HCT116 (cell line): ENCODE measurements at regions of chr11 and their contacts with region 1.

Region 1: GRCh38 chr11:73177778-73178577 is 35.9 kb upstream of the FCHSD2 start:
- DNase-seq: peak; percentile 42
- ATAC-seq: peak; percentile 99
- H3K4me3 ChIP-seq: no peak overlapping the region
- H3K27ac ChIP-seq: no peak overlapping the region
- H3K4me1 ChIP-seq: peaks cover 0 to 11% of the 10 kb centered on the region in 2 experiments; a peak in 1 of 4 replicates
- H3K27me3 ChIP-seq: no peaks in the 10 kb centered on the region
- CTCF ChIP-seq: peak; percentile 75 to 91 (median 86)
- POLR2A ChIP-seq: no peak
- RAD21 ChIP-seq: peak; percentile 99

Region 2: DNA sequence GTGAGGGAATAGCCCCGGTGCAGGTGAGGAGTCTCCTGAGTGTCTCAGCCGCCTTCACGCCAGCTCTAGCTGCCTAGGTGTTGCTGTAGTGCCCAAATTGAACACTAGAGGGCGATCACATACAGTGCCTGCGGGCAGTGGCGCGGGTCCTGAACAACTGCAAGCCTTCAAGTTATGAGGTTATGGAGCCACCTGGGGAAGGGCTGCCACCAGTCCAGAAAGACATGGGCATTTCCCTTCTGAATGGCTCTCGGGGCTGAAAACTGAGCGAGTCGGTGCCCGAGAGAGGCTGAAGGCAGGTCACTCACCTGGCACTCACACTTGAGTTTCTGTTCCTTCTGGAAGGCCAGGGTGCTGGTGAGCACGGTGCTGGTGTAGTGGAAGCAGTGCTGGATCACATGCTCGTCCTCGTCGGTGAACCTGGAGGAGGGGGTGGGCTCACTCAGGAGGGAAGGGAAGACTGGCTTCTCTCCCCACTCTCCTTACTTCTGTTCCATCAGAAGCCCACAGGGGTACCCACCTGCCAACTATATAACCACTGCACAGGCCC is 592.1 kb before region 1 on chr11:
- CTCF ChIA-PET with region 1: interaction called, 3 read pairs
- POLR2A ChIA-PET with region 1: no interaction called
- RAD21 ChIA-PET with region 1: no interaction called
- intact Hi-C with region 1: loop called (anchors 5 kb)
- DNase-seq: peak; percentile 38
- ATAC-seq: peak; percentile 94
- H3K4me3 ChIP-seq: no peak overlapping the region
- H3K27ac ChIP-seq: no peak overlapping the region
- H3K4me1 ChIP-seq: peaks cover 0 to 6% of the 10 kb centered on the region in 2 experiments; a peak in 1 of 4 replicates
- H3K27me3 ChIP-seq: no peaks in the 10 kb centered on the region
- CTCF ChIP-seq: peak; percentile 82 to 88 (median 85)
- POLR2A ChIP-seq: no peak
- RAD21 ChIP-seq: peak; percentile 86

Region 3: GRCh38 chr11:72683782-72684200 is 494.2 kb before region 1 on chr11:
- CTCF ChIA-PET with region 1: interaction called, 11 read pairs
- POLR2A ChIA-PET with region 1: no interaction called
- RAD21 ChIA-PET with region 1: interaction called in 1 of 2 experiments, 4 read pairs
- intact Hi-C with region 1: no loop called
- DNase-seq: no peak
- ATAC-seq: peak; percentile 74
- H3K4me3 ChIP-seq: no peak overlapping the region
- H3K27ac ChIP-seq: no peak overlapping the region
- H3K4me1 ChIP-seq: peaks cover 0 to 13% of the 10 kb centered on the region in 2 experiments; a peak in 3 of 4 replicates
- H3K27me3 ChIP-seq: peaks cover 17% of the 10 kb centered on the region
- CTCF ChIP-seq: peak; percentile 88 to 96 (median 96)
- POLR2A ChIP-seq: no peak
- RAD21 ChIP-seq: peak; percentile 88

Region 4: DNA sequence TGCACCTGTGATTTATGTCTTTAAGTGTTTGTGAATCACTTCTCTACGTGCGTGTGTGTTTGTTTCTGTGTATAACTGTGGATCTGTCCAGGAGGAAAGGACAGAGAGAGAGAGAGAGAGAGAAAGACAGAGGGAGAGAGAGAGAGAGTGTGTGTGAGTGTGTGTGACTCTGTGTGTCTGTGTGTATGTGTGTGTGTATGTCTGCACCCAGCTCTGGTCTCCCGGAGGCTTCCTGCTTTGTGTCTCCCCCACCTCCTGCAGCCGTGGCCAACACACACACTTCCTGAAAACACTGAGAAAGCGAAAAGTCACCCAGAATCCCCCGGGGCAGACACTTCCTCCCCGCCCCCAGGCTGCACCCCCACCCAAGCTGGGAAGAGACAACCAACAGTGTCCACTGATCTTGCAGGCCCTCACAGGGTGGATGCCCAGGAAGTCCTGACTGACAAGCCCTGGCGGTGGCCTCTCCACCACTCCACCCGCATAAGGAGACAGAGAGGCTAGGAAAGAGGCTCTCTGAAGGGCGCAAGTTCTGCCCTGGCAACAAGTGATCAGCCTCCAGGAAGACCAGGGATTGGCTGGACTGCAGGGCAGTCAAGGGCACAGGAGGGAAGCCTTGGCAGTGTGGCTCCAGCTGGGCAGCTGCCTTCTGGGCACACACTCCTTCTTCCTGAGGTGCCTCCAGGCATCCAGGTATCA is 455.8 kb before region 1 on chr11:
- CTCF ChIA-PET with region 1: interaction called, 22 read pairs
- POLR2A ChIA-PET with region 1: no interaction called
- RAD21 ChIA-PET with region 1: interaction called, 5 to 8 read pairs
- intact Hi-C with region 1: loop called (anchors 1 kb)
- DNase-seq: peak; percentile 81
- ATAC-seq: peak; percentile 99
- H3K4me3 ChIP-seq: peak overlapping the region; percentile 57 to 64
- H3K27ac ChIP-seq: peak overlapping the region; percentile 71
- H3K4me1 ChIP-seq: peaks cover 8 to 21% of the 10 kb centered on the region in 2 experiments
- H3K27me3 ChIP-seq: no peaks in the 10 kb centered on the region
- CTCF ChIP-seq: no peak
- POLR2A ChIP-seq: peak; percentile 25
- RAD21 ChIP-seq: no peak

Region 5: GRCh38 chr11:72831513-72832300 is 346.3 kb before region 1 on chr11:
- CTCF ChIA-PET with region 1: interaction called, 79 read pairs
- POLR2A ChIA-PET with region 1: interaction called, 4 read pairs
- RAD21 ChIA-PET with region 1: interaction called, 13 to 14 read pairs
- intact Hi-C with region 1: loop called (anchors 1 kb)
- DNase-seq: peak; percentile 54
- ATAC-seq: peak; percentile 98
- H3K4me3 ChIP-seq: no peak overlapping the region
- H3K27ac ChIP-seq: no peak overlapping the region
- H3K4me1 ChIP-seq: peaks cover 0 to 6% of the 10 kb centered on the region in 2 experiments; a peak in 2 of 4 replicates
- H3K27me3 ChIP-seq: no peaks in the 10 kb centered on the region
- CTCF ChIP-seq: peak; percentile 91 to 97 (median 93)
- POLR2A ChIP-seq: no peak
- RAD21 ChIP-seq: peak; percentile 95

Region 6: GRCh38 chr11:72924568-72925190 is 253.3 kb before region 1 on chr11:
- CTCF ChIA-PET with region 1: interaction called, 22 read pairs
- POLR2A ChIA-PET with region 1: no interaction called
- RAD21 ChIA-PET with region 1: interaction called in 1 of 2 experiments, 3 read pairs
- intact Hi-C with region 1: loop called (anchors 1 kb)
- DNase-seq: peak; percentile 8
- ATAC-seq: peak; percentile 63; the same call in 1 of the 2 replicates
- H3K4me3 ChIP-seq: no peak overlapping the region
- H3K27ac ChIP-seq: no peak overlapping the region
- H3K4me1 ChIP-seq: no peaks in the 10 kb centered on the region
- H3K27me3 ChIP-seq: no peaks in the 10 kb centered on the region
- CTCF ChIP-seq: peak; percentile 55 to 59 (median 55)
- POLR2A ChIP-seq: no peak
- RAD21 ChIP-seq: peak; percentile 70

Region 7: GRCh38 chr11:73141848-73142286 is 36.1 kb before region 1 on chr11:
- CTCF ChIA-PET with region 1: interaction called, 11 read pairs
- POLR2A ChIA-PET with region 1: no interaction called
- RAD21 ChIA-PET with region 1: no interaction called
- intact Hi-C with region 1: no loop called
- DNase-seq: peak; percentile 13
- ATAC-seq: peak; percentile 65
- H3K4me3 ChIP-seq: peak overlapping the region; percentile 84 to 86
- H3K27ac ChIP-seq: peak overlapping the region; percentile 88
- H3K4me1 ChIP-seq: peaks cover 8 to 22% of the 10 kb centered on the region in 2 experiments; a peak in 3 of 4 replicates
- H3K27me3 ChIP-seq: no peaks in the 10 kb centered on the region
- CTCF ChIP-seq: no peak
- POLR2A ChIP-seq: no peak
- RAD21 ChIP-seq: no peak